ENCODE measurements at regions of chr16 and their contacts with region 1.

Region 1: GRCh38 chr16:51175081-51175480 is 24.0 kb upstream of the SALL1 start:
- DNase-seq: no peak
- ATAC-seq: no peak
- H3K4me3 ChIP-seq: no peak overlapping the region
- H3K27ac ChIP-seq: no peak overlapping the region
- H3K4me1 ChIP-seq: no peaks in the 10 kb centered on the region
- H3K27me3 ChIP-seq: no peaks in the 10 kb centered on the region
- CTCF ChIP-seq: no peak

Region 2: GRCh38 chr16:50932348-50932916 is 242.6 kb before region 1 on chr16:
- CTCF ChIA-PET with region 1: no interaction called
- POLR2A ChIA-PET with region 1: no interaction called
- in situ Hi-C with region 1: no loop called
- intact Hi-C with region 1: no loop called
- DNase-seq: no peak
- ATAC-seq: no peak
- H3K4me3 ChIP-seq: no peak overlapping the region
- H3K27ac ChIP-seq: no peak overlapping the region
- H3K4me1 ChIP-seq: no peaks in the 10 kb centered on the region
- H3K27me3 ChIP-seq: no peaks in the 10 kb centered on the region; the same call in 1 of the 2 replicates
- CTCF ChIP-seq: no peak

Region 3: DNA sequence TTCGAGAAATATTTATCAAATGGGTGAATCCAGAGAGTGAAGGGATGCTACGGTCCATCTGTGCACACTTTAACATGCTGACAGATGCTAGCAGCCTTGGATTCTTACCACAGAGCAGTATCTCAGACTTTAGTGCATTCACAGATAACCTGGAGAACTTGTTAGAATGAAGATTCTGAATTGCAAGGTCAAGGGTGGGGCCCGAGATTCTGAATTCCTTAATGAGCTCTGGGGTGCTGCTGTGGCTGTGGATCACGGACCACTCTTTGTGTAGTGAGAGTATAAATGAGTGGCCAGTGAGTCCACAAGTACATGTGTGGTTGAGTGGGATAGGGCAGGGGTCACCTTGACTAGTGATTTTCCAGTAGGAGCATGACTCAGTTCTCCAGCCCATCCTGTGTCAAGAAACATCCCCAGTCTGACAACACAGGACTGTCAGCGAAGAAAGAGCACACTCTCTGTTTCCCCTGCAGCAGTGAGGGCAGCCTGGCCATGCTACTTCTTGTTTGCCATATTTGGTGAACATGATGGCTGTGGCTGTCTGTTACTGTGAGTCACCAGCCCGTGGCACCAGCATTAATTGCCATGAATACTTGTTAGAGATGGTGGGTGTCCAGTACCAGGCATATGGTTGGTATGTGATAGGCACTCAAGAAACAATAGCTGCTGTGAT is 11.1 kb before region 1 on chr16:
- CTCF ChIA-PET with region 1: interaction called, 15 read pairs
- POLR2A ChIA-PET with region 1: no interaction called
- in situ Hi-C with region 1: no loop called
- intact Hi-C with region 1: no loop called
- DNase-seq: no peak
- ATAC-seq: no peak
- H3K4me3 ChIP-seq: no peak overlapping the region
- H3K27ac ChIP-seq: no peak overlapping the region
- H3K4me1 ChIP-seq: no peaks in the 10 kb centered on the region
- H3K27me3 ChIP-seq: no peaks in the 10 kb centered on the region
- CTCF ChIP-seq: no peak

Measured in Panc1 (cell line).